Activated T-helper 2 cell treated with anti-CD3 and anti-CD28 coated beads, Interferon-gamma antibody, Interleukin-2, Interleukin-4, amounts not matched to agents 10 μg/mL and 5 μg/mL and 100 μg/mL, durations not matched to agents 14 hours and 24 hours and 36 hours (primary cell): ENCODE measurements at regions of chr6 and their contacts with region 1.

Region 1: GRCh38 chr6:149389509-149390297 is 10.4 kb upstream of the SUMO4 start:
- DNase-seq: no peak
- H3K4me3 Mint-ChIP-seq: no peak overlapping the region
- H3K27ac Mint-ChIP-seq: peak overlapping the region; percentile 9
- H3K4me1 Mint-ChIP-seq: peaks cover 60% of the 10 kb centered on the region
- H3K27me3 Mint-ChIP-seq: no peaks in the 10 kb centered on the region

Region 2: GRCh38 chr6:149335924-149336608 is 53.6 kb before region 1 on chr6:
- intact Hi-C with region 1: loop called (anchors 2 kb)
- DNase-seq: no peak
- H3K4me3 Mint-ChIP-seq: peak overlapping the region; percentile 45
- H3K27ac Mint-ChIP-seq: peak overlapping the region; percentile 88
- H3K4me1 Mint-ChIP-seq: peaks cover 80% of the 10 kb centered on the region
- H3K27me3 Mint-ChIP-seq: no peaks in the 10 kb centered on the region

Region 3: DNA sequence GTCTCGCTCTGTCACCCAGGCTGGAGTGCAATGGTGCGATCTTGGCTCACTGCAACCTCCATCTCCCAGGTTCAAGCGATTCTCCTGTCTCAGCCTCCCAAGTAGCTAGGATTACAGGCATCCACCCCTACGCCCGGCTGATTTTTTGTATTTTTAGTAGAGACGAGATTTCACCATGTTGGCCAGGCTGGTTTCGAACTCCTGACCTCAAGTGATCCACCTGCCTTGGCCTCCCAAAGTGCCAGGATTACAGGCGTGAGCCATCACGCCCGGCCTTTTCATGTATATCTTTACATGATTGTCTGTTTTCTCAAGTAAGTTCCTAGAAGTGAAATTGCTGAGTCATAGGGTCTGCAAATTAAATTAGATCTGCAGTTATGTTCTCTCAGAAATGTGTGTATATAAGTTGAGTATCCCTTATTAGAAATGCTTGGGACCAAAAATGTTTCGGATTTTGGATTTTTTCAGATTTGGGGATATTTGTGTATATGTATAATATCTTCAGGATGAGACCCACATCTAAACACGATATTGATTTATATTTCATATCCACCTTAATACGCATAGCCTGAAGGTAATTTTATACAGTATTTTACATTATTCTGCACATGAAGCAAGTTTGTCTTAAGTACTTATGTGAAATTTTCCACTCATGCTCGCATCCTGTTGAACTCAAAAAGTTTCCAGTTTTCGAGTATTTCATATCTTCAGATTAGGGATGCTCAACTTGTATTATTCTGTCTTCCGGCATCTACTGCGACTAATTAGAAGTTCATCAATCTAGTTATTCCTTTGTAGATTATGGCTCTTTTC is 31.8 kb before region 1 on chr6:
- intact Hi-C with region 1: loop called (anchors 5 kb)
- DNase-seq: no peak
- H3K4me3 Mint-ChIP-seq: no peak overlapping the region
- H3K27ac Mint-ChIP-seq: peak overlapping the region; percentile 31
- H3K4me1 Mint-ChIP-seq: peaks cover 65% of the 10 kb centered on the region
- H3K27me3 Mint-ChIP-seq: no peaks in the 10 kb centered on the region